OCI-LY7 (cell line): ENCODE measurements at regions of chr13 and their contacts with region 1.

Region 1: DNA sequence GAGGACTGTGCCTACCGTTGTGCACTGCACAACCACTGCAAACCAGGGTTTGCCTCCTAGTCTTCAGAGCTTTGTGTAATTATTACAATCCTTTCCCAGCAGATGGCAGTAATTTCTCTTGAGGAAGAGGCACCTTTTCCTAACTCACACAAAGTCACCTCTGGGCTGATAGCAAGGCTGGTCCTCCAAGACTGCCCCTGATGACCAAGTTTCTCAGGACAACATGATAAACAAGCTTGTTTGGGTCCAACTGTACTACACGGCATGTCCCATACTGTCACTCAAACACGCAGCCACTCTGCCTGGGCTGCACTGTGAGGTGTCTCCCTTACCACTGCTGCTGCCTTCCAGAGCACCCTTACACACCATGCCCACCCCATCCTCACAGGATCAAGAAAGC is 39.3 kb downstream of the RFXAP start:
- DNase-seq: peak; percentile 82
- H3K4me3 ChIP-seq: no peak overlapping the region
- H3K27ac ChIP-seq: no peak overlapping the region
- H3K4me1 ChIP-seq: no peaks in the 10 kb centered on the region
- CTCF ChIP-seq: peak; percentile 82

Region 2: DNA sequence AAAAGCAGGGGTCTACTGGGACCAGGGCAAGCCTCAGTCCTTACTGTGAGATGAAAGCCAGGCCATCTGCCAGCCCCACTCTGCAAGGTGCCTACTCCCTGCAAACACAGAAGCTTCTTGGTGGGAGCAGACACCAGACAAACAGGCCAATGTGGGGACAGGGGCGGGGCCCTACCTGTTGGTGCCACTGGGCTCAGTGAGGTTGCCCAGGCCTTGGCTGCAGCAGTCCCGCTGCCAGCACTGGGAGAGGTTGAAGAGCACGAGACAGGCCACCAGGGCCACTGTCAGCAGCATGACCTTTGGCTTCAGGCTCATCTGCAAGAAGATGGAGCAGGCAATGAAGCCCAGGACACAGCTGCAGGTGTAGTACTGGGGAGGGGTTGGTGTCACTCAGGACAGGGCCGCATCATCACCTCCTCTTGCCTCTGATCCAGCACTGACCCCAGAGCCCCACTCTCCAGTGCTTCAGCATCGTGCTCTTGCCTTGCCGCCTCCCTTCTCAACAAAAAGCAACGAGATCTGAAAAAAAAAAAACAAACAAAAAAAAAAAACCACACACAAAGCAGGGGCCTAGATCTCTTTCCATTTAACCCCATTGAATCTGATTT is 1843.6 kb before region 1 on chr13:
- CTCF ChIA-PET with region 1: no interaction called
- POLR2A ChIA-PET with region 1: interaction called, 11 read pairs
- intact Hi-C with region 1: no loop called
- DNase-seq: no peak
- H3K4me3 ChIP-seq: no peak overlapping the region
- H3K27ac ChIP-seq: no peak overlapping the region
- H3K4me1 ChIP-seq: no peaks in the 10 kb centered on the region
- CTCF ChIP-seq: no peak

Region 3: GRCh38 chr13:36837354-36838092 is 20.8 kb before region 1 on chr13:
- CTCF ChIA-PET with region 1: no interaction called
- POLR2A ChIA-PET with region 1: no interaction called
- intact Hi-C with region 1: no loop called
- DNase-seq: no peak
- H3K4me3 ChIP-seq: no peak overlapping the region
- H3K27ac ChIP-seq: no peak overlapping the region
- H3K4me1 ChIP-seq: no peaks in the 10 kb centered on the region
- CTCF ChIP-seq: no peak

Region 4: GRCh38 chr13:36919833-36920615 is 61.7 kb after region 1 on chr13 and contains the start of gene SMAD9:
- CTCF ChIA-PET with region 1: no interaction called
- POLR2A ChIA-PET with region 1: no interaction called
- intact Hi-C with region 1: loop called (anchors 5 kb)
- DNase-seq: peak; percentile 73
- H3K4me3 ChIP-seq: peak within 1 kb of the TSS; percentile 84
- H3K27ac ChIP-seq: peak within 1 kb of the TSS; percentile 79
- H3K4me1 ChIP-seq: peaks cover 85% of the 10 kb centered on the region
- CTCF ChIP-seq: no peak
- total RNA-seq, gene SMAD9: 9.7 and 10.8 TPM in 2 replicates

Region 5: DNA sequence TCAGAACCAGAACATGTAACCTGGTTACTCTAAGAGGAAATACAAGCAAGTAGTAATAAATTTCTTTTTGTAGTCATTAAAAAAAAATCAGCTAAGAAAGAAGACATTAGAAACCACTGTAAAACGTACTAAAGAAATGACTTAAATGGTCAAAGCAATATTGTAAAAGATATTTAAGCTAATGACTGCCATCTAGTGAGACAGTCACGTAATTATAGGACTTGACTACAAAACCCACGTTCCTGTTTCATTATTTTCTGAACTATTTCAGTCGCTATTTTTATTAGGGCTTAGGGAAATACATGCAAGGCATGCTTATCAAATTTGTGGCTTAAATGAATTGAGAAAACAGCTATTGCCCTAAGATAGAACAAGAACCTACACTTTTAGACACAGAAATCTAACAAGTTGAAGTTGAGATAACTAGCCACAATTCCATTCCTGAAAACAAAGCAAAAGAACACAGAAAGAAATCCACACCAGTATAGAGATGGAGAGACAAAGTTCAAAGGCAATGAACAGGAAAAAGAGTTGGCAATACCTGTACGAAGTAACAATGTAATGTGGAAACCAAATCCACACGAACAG is 123.0 kb after region 1 on chr13:
- CTCF ChIA-PET with region 1: interaction called, 12 read pairs
- POLR2A ChIA-PET with region 1: interaction called, 4 read pairs
- intact Hi-C with region 1: loop called (anchors 1 kb)
- DNase-seq: peak; percentile 76
- H3K4me3 ChIP-seq: no peak overlapping the region
- H3K27ac ChIP-seq: peak overlapping the region; percentile 31
- H3K4me1 ChIP-seq: peaks cover 17% of the 10 kb centered on the region
- CTCF ChIP-seq: peak; percentile 92

Region 6: DNA sequence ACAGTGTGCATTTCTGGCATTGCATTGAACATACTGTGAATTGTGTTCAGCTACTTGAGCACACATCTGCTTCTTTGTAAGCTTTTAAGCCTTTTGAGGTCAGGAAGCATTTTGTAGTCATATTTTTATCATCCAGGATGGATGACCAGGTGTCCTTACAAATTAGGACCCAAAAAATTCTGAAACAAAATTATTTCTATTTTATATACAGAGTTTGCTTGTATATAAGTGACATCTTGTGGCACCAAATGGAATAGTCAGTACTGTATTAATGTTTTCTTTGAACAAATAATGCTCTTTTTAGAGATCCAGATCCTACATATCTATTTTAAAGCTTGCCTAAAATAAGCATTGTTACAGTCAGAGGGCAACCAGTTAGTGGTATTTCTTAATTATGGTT is 210.7 kb after region 1 on chr13:
- CTCF ChIA-PET with region 1: no interaction called
- POLR2A ChIA-PET with region 1: interaction called, 3 read pairs
- intact Hi-C with region 1: loop called (anchors 1 kb)
- DNase-seq: peak; percentile 68
- H3K4me3 ChIP-seq: no peak overlapping the region
- H3K27ac ChIP-seq: peak overlapping the region; percentile 58
- H3K4me1 ChIP-seq: peaks cover 35% of the 10 kb centered on the region
- CTCF ChIP-seq: peak; percentile 90

Region 7: DNA sequence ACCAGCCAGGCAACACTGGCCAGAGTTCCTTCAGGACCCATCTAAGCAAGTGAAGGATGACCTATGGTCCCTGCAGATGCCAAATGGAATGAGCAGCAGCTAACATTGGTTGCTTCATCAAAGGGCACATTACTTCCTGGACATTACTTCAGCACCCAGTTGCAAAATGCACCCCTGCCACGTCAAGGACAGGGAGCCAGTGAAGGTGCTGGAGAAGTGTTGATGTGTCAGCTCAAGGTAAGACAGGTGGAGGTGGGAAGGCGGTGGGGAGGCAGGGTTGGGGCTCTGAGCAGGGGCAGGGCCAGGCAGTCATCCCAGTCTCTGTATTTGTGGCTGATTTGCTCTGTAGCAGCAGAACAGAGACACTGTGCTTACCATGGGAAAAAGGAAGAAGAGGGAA is 232.6 kb after region 1 on chr13:
- CTCF ChIA-PET with region 1: no interaction called
- POLR2A ChIA-PET with region 1: no interaction called
- intact Hi-C with region 1: no loop called
- DNase-seq: no peak
- H3K4me3 ChIP-seq: no peak overlapping the region
- H3K27ac ChIP-seq: no peak overlapping the region
- H3K4me1 ChIP-seq: no peaks in the 10 kb centered on the region
- CTCF ChIP-seq: no peak